Endothelial cell of umbilical vein (primary cell): ENCODE measurements at regions of chr15 and their contacts with region 1.

Region 1: GRCh38 chr15:60916679-60917460 is 312.2 kb downstream of the RORA start:
- DNase-seq: peak; percentile 80
- H3K4me3 ChIP-seq: no peak overlapping the region
- H3K27ac ChIP-seq: no peak overlapping the region
- H3K4me1 ChIP-seq: no peaks in the 10 kb centered on the region
- H3K27me3 ChIP-seq: no peaks in the 10 kb centered on the region
- CTCF ChIP-seq: peak; percentile 72 to 87
- POLR2A ChIP-seq: no peak

Region 2: GRCh38 chr15:60507596-60508424 is 409.1 kb before region 1 on chr15:
- CTCF ChIA-PET with region 1: interaction called, 26 read pairs
- POLR2A ChIA-PET with region 1: no interaction called
- dilution Hi-C with region 1: no loop called
- intact Hi-C with region 1: loop called (anchors 1 kb)
- DNase-seq: peak; percentile 80
- H3K4me3 ChIP-seq: no peak overlapping the region
- H3K27ac ChIP-seq: no peak overlapping the region
- H3K4me1 ChIP-seq: no peaks in the 10 kb centered on the region
- H3K27me3 ChIP-seq: no peaks in the 10 kb centered on the region
- CTCF ChIP-seq: peak; percentile 78 to 87
- POLR2A ChIP-seq: no peak

Region 3: GRCh38 chr15:60585743-60586708 is 330.8 kb before region 1 on chr15:
- CTCF ChIA-PET with region 1: interaction called, 270 read pairs
- POLR2A ChIA-PET with region 1: no interaction called
- dilution Hi-C with region 1: no loop called
- intact Hi-C with region 1: loop called (anchors 1 kb)
- DNase-seq: peak; percentile 80
- H3K4me3 ChIP-seq: no peak overlapping the region
- H3K27ac ChIP-seq: no peak overlapping the region
- H3K4me1 ChIP-seq: peaks cover 25% of the 10 kb centered on the region
- H3K27me3 ChIP-seq: no peaks in the 10 kb centered on the region
- CTCF ChIP-seq: peak; percentile 68 to 75
- POLR2A ChIP-seq: no peak

Region 4: GRCh38 chr15:60673918-60674558 is 242.8 kb before region 1 on chr15:
- CTCF ChIA-PET with region 1: interaction called, 6 read pairs
- POLR2A ChIA-PET with region 1: no interaction called
- dilution Hi-C with region 1: no loop called
- intact Hi-C with region 1: loop called (anchors 5 kb)
- DNase-seq: peak; percentile 97
- H3K4me3 ChIP-seq: no peak overlapping the region
- H3K27ac ChIP-seq: peak overlapping the region; percentile 68
- H3K4me1 ChIP-seq: peaks cover 9% of the 10 kb centered on the region
- H3K27me3 ChIP-seq: no peaks in the 10 kb centered on the region
- CTCF ChIP-seq: no peak
- POLR2A ChIP-seq: no peak

Region 5: DNA sequence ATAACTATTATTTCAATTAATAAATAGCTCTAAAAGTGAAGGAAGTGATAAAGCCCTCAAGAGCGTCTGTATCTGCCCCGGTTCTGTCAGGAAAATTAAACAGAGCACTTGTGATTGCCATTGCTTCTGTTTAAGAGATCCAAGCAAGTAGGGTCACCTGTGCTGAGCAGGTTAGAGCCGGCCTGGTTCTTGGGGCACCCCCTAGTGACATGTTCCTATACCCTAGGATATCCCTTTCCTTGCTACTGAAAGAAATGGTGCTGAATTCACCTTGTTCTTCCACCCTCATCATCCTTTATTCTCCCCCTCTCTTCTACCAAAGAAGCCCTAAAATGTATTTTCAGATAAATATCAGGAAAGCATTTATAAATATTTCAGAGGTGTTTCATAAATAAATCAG is 11.3 kb before region 1 on chr15:
- CTCF ChIA-PET with region 1: interaction called, 13 read pairs
- POLR2A ChIA-PET with region 1: no interaction called
- dilution Hi-C with region 1: no loop called
- intact Hi-C with region 1: no loop called
- DNase-seq: no peak
- H3K4me3 ChIP-seq: no peak overlapping the region
- H3K27ac ChIP-seq: no peak overlapping the region
- H3K4me1 ChIP-seq: no peaks in the 10 kb centered on the region
- H3K27me3 ChIP-seq: peaks cover 4% of the 10 kb centered on the region in 2 experiments
- CTCF ChIP-seq: no peak
- POLR2A ChIP-seq: no peak

Region 6: GRCh38 chr15:61034678-61035291 is 117.9 kb after region 1 on chr15:
- CTCF ChIA-PET with region 1: interaction called, 10 read pairs
- POLR2A ChIA-PET with region 1: no interaction called
- dilution Hi-C with region 1: no loop called
- intact Hi-C with region 1: no loop called
- DNase-seq: peak; percentile 92
- H3K4me3 ChIP-seq: peak overlapping the region in 1 of 3 experiments; percentile 52
- H3K27ac ChIP-seq: peak overlapping the region; percentile 95
- H3K4me1 ChIP-seq: peaks cover 61% of the 10 kb centered on the region
- H3K27me3 ChIP-seq: no peaks in the 10 kb centered on the region
- CTCF ChIP-seq: no peak
- POLR2A ChIP-seq: no peak